Tibial artery (tissue), 4 donors: ENCODE measurements at regions of chr4 and their contacts with region 1.

Region 1: DNA sequence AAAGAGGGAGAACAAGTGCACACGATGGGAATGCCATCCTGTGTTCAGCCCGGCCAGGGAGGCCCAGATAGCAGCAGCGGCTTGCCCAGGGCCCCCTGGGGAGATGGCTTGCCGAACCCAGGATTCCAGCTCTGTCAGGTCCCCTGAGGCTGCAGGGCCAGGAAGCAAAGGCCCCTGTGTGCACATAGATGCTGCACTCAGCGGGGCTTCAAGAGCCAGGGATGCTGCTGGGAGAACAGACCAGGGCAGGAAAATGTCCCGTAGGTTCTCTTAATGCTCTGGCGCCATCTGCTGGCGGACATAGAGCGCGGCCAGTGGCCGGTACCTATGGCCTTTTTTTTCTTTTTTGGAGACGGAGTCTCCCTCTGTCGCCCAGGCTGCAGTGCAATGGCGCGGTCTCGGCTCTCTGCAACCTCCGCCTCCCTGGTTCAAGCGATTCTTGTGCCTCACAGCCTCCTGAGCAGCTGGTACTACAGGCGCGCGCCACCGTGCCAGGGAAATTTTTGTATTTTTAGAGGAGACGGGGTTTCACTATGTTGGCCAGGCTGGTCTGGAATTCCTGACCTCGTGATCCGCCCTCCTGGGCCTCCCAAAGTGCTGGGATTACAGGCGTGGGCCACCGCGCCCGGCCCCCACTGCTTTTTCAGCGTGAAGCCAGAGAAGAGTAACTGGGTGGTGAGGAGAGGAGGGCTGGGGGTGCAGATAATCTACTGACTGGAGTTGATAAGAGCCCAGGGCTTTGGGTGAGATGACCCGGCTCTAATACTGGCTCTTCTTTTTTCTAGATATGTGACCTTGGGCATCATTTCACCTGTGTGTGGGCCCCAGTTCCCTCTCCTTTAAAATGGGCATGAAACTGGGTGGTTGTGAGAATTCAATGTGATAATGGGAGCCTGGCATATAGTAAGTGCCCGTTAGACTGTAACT is 22.5 kb downstream of the MED28 start:
- DNase-seq: peak; percentile 68 to 74
- H3K4me3 ChIP-seq: no peak overlapping the region
- H3K27ac ChIP-seq: no peak overlapping the region
- H3K4me1 ChIP-seq: no peaks in the 10 kb centered on the region
- H3K27me3 ChIP-seq: no peaks in the 10 kb centered on the region
- CTCF ChIP-seq: peak; percentile 67 to 91

Region 2: DNA sequence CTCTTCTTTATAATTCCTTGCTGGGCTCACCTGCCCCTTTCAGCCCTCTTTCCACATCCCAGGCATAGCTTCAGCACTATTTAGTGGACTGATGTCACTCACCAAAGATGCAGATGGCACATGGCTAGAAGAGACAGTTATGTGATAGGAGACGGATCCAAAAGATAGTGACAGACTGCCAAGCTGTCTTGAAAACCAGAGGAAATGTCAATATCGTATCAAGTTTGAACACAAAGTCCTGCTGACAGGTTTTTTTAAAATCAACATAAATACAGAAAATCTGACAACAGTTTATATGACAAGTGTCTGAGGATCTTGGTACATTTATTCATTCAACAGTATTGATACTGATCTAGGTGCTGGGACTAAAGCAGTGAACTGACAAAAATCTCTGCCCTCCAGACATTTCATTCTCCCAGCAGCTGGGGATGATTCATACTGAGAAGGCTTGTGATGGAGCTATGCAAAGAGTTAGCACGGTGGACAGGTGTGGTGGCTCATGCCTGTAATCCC is 107.5 kb before region 1 on chr4:
- intact Hi-C with region 1: no loop called
- DNase-seq: no peak
- H3K4me3 ChIP-seq: no peak overlapping the region
- H3K27ac ChIP-seq: no peak overlapping the region
- H3K4me1 ChIP-seq: no peaks in the 10 kb centered on the region
- H3K27me3 ChIP-seq: peaks cover 0 to 6% of the 10 kb centered on the region in 2 donors
- CTCF ChIP-seq: no peak

Region 3: DNA sequence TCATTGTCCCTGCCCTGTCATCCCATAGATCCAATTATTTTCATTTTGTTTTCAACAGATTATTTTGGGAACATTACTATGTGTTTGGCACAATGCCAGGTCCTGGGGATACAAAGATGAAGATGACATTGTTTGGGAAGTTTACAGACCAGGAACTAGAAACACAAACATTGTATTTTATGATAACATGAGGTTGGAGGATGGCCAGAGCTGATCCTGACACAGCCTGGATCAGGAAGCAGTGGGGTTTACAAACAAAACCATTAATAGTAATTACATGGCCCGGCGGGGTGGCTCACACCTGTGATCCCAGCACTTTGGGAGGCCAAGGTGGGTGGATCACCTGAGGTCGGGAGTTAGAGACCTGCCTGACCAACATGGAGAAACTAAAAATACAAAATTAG is 92.1 kb before region 1 on chr4:
- intact Hi-C with region 1: loop called (anchors 5 kb)
- DNase-seq: no peak
- H3K4me3 ChIP-seq: no peak overlapping the region
- H3K27ac ChIP-seq: no peak overlapping the region
- H3K4me1 ChIP-seq: no peaks in the 10 kb centered on the region
- H3K27me3 ChIP-seq: peaks cover 0 to 7% of the 10 kb centered on the region in 2 donors
- CTCF ChIP-seq: no peak